AG04450 (cell line): ENCODE measurements at regions of chr13 and their contacts with region 1.

Region 1: DNA sequence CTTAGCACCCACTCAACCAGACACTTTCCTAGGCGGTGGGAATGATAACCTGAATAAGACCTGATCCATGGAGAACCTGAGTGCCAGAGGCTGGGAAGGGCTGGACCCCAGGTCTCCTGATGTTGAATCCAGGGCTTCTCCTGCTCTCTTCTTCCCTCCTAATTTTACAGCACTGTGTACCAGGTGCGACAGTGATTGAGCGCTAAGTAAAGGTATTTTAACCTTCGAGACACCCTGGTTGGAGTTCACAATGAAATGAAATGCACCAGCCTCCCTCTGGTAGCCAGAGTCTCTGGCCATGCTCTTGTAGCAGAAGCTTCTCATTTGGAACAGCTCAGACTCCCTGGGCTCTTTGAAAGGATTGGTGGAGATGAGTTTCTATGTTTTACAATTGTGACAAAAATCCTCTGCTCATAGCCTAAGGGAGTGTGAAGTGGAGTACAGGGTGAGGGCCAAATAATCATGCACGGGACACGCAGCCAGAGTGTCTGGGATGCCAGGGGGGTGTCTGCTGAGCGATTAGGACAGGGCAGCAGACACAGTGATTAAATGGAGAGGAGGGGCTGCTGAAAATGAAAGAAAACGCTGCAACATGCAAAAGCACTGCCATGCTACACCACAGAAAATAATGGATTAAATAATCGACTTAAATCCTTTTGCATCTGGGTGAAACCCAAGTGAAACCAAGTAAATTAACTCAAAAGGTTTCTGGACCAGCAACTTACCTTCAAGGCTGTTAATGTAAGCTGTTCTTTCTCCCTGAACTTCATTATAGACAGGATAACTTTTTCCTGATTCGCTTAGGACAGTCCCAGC is 83.8 kb downstream of the FAM216B start:
- DNase-seq: no peak
- H3K4me3 ChIP-seq: peak overlapping the region; percentile 25; the same call in 1 of the 2 replicates
- H3K27ac ChIP-seq: no peak overlapping the region
- H3K27me3 ChIP-seq: peaks cover 5% of the 10 kb centered on the region
- CTCF ChIP-seq: no peak

Region 2: DNA sequence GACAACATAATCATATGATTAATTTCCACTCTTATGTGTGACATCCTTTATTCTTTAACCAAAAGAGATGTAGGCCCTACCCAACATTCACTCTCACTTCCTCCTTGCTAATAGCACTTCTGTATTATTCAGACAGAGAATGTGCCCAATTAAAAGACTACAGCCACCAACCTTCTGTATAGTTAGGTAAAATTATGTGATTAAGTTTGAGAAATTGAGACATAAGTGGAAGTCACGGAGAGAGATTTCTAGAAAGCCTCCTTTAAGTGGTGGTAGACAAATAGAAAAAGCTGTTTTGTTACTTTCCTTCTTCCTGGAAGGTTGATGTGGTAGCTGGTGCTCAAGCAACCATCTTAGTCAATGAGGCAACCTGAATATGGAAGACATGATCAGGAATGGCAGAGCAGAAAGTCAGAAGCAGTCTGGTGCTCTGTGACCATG is 112.1 kb after region 1 on chr13:
- CTCF ChIA-PET with region 1: no interaction called
- POLR2A ChIA-PET with region 1: interaction called, 10 read pairs
- DNase-seq: no peak
- H3K4me3 ChIP-seq: no peak overlapping the region
- H3K27ac ChIP-seq: no peak overlapping the region
- H3K27me3 ChIP-seq: no peaks in the 10 kb centered on the region
- CTCF ChIP-seq: no peak